ENCODE measurements at regions of chr9 and their contacts with region 1.

Region 1: GRCh38 chr9:70542311-70542931 is 128.0 kb upstream of the KLF9 start:
- DNase-seq: no peak
- H3K4me3 ChIP-seq: no peak overlapping the region
- H3K27ac ChIP-seq: no peak overlapping the region
- H3K4me1 ChIP-seq: no peaks in the 10 kb centered on the region
- H3K27me3 ChIP-seq: no peaks in the 10 kb centered on the region
- CTCF ChIP-seq: no peak

Region 2: GRCh38 chr9:70285246-70285645 is 257.2 kb before region 1 on chr9:
- CTCF ChIA-PET with region 1: no interaction called
- POLR2A ChIA-PET with region 1: interaction called, 29 read pairs
- intact Hi-C with region 1: no loop called
- DNase-seq: peak; percentile 21
- H3K4me3 ChIP-seq: no peak overlapping the region
- H3K27ac ChIP-seq: no peak overlapping the region
- H3K4me1 ChIP-seq: peaks cover 9% of the 10 kb centered on the region
- H3K27me3 ChIP-seq: no peaks in the 10 kb centered on the region
- CTCF ChIP-seq: no peak

Region 3: DNA sequence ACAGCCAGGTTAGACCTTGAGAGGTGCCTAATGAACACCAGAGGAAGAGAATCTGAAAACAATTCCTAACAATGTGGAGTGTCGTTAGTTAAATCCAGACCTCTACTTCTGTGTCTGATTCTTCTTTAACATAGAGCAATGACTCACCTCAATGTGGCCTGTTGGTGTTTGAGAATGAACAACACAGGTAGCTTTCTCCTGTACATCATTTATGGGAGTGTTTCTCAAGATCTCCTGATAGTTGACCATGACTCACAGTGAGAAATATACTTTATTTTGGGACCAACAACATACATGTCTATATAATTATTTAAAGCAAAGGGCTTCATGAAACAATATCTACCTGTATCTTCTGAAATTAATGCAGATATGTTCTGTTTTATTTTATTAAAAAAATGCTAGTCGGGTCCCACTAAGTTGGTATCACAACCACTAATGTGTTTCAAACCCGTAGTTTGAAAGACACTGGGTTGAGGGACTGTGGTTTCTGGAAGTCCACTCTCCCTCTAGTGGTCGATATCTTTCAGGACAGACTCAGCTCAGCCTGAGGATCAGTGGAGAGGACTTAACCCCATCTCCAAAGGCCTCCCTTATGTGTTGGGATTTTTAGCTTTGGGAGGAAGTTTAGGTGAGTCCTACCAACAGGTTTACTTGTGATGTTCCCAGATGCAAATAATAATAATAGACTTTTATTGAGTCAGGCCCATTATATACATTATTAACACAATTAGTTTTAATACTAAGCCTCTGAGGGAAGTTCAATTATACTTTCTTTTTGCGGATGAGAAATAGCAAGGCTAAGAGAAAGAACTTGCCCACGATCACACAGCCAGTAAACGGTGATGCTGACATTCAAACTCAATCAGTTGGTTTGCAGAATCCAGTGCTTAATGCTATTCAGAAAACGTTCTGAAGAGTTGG is 58.0 kb before region 1 on chr9:
- CTCF ChIA-PET with region 1: no interaction called
- POLR2A ChIA-PET with region 1: no interaction called
- intact Hi-C with region 1: no loop called
- DNase-seq: peak; percentile 58
- H3K4me3 ChIP-seq: no peak overlapping the region
- H3K27ac ChIP-seq: no peak overlapping the region
- H3K4me1 ChIP-seq: no peaks in the 10 kb centered on the region
- H3K27me3 ChIP-seq: no peaks in the 10 kb centered on the region
- CTCF ChIP-seq: peak; percentile 79